Heart left ventricle (tissue), 16 donors: ENCODE measurements at regions of chr19 and their contacts with region 1.

Region 1: DNA sequence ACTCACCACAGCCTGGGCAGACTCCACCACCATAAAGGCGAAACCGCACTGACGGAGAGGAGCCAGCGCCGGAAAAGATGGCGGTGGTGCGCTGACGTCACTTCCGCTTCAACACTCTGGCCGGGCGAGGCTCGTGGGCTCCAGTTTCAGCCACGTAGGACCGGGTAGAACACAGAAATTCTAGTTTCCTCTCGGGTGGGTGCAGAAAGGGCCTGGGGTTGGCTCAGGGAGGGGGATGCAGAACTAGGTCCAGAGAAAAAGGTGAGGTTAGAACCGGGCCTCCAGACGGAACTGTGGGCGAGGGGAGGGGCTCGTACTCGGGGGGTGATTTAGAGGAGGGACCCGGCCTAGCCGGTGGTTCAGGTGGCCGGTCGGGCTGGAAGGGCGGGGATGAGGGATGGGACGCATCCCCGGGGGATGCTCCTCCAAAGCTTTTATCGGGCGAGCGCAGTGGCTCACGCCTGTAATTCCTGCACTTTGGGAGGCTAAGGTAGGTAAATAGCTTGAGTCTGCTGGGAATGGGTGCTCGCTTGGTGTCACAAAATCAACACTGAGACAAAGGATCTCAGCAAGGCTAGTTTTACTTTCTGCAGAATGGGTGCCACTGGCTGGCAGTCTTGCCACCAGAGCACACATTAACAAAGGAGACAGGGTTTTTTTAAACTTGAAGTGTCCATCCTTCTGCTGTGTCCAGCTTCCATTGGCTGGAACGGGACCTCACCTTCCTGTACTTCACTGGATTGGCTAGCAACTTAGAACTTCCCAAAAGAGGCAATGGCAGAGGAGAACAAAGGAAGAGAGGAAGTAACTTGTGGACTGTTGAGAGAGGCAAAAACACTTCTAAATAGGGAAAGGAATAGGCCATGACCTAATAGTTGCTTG is at the start of gene ZNF561:
- DNase-seq: peak; percentile 85 to 93 (median 90)
- ATAC-seq: peak; percentile 93 to 96 (median 95)
- H3K4me3 ChIP-seq: peak within 1 kb of the TSS; percentile 60 to 97 (median 76)
- H3K27ac ChIP-seq: peak within 1 kb of the TSS; percentile 79 to 97 (median 93)
- H3K4me1 ChIP-seq: peaks cover 4 to 30% (median 18%) of the 10 kb centered on the region in 12 donors
- H3K27me3 ChIP-seq: no peaks in the 10 kb centered on the region
- CTCF ChIP-seq: no peak
- POLR2A ChIP-seq: no peak
- total RNA-seq, gene ZNF561: 12.2 to 30.0 (median 20.8) TPM

Region 2: GRCh38 chr19:9528757-9529336 is 92.5 kb before region 1 on chr19:
- intact Hi-C with region 1: no loop called
- DNase-seq: no peak
- ATAC-seq: no peak
- H3K4me3 ChIP-seq: no peak overlapping the region
- H3K27ac ChIP-seq: no peak overlapping the region
- H3K4me1 ChIP-seq: no peaks in the 10 kb centered on the region
- H3K27me3 ChIP-seq: no peaks in the 10 kb centered on the region
- CTCF ChIP-seq: no peak
- POLR2A ChIP-seq: no peak

Region 3: DNA sequence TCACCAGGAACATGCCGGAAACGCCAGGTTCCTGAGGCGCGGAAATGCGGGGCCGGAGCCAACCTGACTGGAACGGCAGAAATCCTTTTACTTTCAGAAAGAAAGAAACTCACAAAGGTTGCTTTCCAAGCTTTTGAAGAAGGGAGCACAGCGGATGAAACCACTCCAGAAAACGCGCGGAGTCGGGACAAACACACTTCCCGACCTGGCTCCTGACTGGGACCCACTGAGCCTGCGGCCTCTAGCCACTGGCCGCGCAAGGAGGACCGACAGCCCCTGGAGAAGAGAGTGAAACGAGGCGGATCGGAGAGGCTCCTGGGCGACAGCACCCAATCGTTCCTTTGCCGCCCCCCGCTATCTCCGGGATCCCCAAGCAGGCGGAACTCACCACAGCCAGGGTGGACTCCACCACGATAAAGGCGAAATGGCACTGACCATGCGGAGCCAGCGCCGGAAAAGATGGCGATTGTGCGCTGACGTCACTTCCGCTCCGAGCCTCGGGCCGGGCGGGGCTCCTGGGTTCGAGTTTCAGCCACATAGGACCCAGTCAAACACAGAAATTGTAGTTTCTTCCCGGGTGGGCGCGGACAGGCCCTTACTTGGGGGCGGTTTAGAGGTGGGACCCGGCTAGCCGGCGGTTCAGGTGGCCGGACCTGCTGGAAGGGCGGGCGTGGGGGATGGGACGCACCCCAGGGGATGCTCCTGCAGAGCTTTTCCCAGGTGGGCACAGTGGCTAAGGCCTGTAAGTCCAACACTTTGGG is 37.1 kb before region 1 on chr19 and contains the start of gene ZNF121:
- intact Hi-C with region 1: loop called in 1 of 10 experiments (anchors 2 kb)
- DNase-seq: peak; percentile 87 to 92 (median 90)
- ATAC-seq: peak; percentile 93 to 98 (median 97)
- H3K4me3 ChIP-seq: peak within 1 kb of the TSS; percentile 53 to 98 (median 87)
- H3K27ac ChIP-seq: peak within 1 kb of the TSS; percentile 69 to 95 (median 91)
- H3K4me1 ChIP-seq: peaks cover 0 to 30% (median 19%) of the 10 kb centered on the region in 12 donors
- H3K27me3 ChIP-seq: peaks cover 0 to 14% (median 0%) of the 10 kb centered on the region in 9 donors
- CTCF ChIP-seq: peak in 2 of 12 donors; percentile 10 to 13
- POLR2A ChIP-seq: peak in 1 of 2 donors; percentile 38
- total RNA-seq, gene ZNF121: 15.6 to 25.4 (median 19.1) TPM

Region 4: GRCh38 chr19:9674663-9675357 is 53.4 kb after region 1 on chr19 and contains the start of gene ZNF562:
- intact Hi-C with region 1: loop called in 4 of 10 experiments (anchors 2 to 10 kb)
- DNase-seq: peak; percentile 90 to 94 (median 92)
- ATAC-seq: peak; percentile 93 to 99 (median 98)
- H3K4me3 ChIP-seq: peak within 1 kb of the TSS; percentile 64 to 96 (median 84)
- H3K27ac ChIP-seq: peak within 1 kb of the TSS; percentile 84 to 99 (median 93)
- H3K4me1 ChIP-seq: peaks cover 0 to 12% (median 4%) of the 10 kb centered on the region in 12 donors
- H3K27me3 ChIP-seq: no peaks in the 10 kb centered on the region
- CTCF ChIP-seq: no peak
- POLR2A ChIP-seq: peak in 1 of 2 donors; percentile 48
- total RNA-seq, gene ZNF562: 13.5 to 24.1 (median 20.7) TPM

Region 5: DNA sequence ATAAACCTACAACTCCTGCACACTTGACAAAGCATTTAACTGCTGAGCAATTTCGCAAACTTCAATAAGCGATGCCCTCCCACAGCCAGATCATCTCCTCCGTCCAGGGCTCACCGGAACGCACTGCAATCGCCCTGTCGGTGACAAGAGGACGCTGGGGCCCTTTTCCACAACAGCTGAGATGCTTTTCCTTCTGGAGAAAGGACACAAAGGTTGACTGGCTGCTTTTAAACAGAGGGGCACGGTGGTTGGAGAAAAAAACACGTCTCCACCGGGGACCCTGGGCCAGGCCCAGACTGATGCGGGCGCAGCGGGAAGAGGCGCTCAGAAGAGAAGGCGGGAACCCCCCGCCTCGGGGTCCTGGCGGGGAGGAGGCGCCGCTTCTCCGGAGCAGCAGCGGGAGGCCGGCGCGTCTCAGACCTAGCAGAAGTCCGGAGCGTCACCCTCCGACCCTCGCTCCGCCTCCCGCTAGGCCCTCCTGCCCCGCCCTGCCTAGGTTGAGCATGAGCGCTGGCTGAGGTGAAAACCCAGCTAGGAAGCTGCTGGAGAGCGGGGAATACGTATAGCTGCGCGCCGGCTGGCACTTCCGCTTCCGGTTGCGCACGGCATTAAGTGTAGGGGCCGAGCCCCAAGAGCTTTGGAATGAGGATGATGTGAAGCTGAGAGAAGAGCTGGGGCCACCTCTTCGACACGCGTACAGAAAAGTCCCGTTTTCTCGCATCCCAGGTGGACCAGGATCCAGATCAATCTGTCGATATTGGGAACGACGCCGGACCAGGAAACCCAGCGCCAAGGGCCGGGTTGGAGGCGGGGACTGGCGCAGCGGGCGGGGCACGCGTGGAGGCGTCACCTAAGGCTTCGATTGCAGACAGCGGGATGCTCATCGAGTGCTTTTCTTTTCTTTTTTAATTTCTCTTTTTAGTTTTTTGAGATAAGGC is 147.0 kb after region 1 on chr19 and contains the start of gene ZNF846:
- intact Hi-C with region 1: loop called in 2 of 10 experiments (anchors 1 kb)
- DNase-seq: peak; percentile 92 to 96 (median 95)
- ATAC-seq: peak; percentile 97 to 100 (median 99)
- H3K4me3 ChIP-seq: peak within 1 kb of the TSS; percentile 57 to 91 (median 78)
- H3K27ac ChIP-seq: peak within 1 kb of the TSS; percentile 89 to 98 (median 92)
- H3K4me1 ChIP-seq: peaks cover 0 to 20% (median 15%) of the 10 kb centered on the region in 12 donors
- H3K27me3 ChIP-seq: no peaks in the 10 kb centered on the region
- CTCF ChIP-seq: no peak
- POLR2A ChIP-seq: peak in 1 of 2 donors; percentile 62
- total RNA-seq, gene ZNF846: 6.5 to 11.0 (median 8.4) TPM

Region 6: GRCh38 chr19:9818734-9819589 is 197.6 kb after region 1 on chr19 and contains the start of gene FBXL12:
- intact Hi-C with region 1: loop called in 1 of 10 experiments (anchors 1 kb)
- DNase-seq: peak; percentile 100
- ATAC-seq: peak; percentile 95 to 96 (median 96)
- H3K4me3 ChIP-seq: peak within 1 kb of the TSS; percentile 69 to 98 (median 88)
- H3K27ac ChIP-seq: peak within 1 kb of the TSS; percentile 88 to 98 (median 96)
- H3K4me1 ChIP-seq: peaks cover 4 to 26% (median 18%) of the 10 kb centered on the region in 12 donors
- H3K27me3 ChIP-seq: no peaks in the 10 kb centered on the region
- CTCF ChIP-seq: no peak
- POLR2A ChIP-seq: peak; percentile 36 to 84
- total RNA-seq, gene FBXL12: 9.8 to 17.6 (median 12.2) TPM